Naive thymus-derived CD4-positive, alpha-beta T cell (primary cell): ENCODE measurements at regions of chr10 and their contacts with region 1.

Region 1: GRCh38 chr10:73785221-73785720 is at the start of gene ZSWIM8:
- DNase-seq: peak; percentile 70 to 93 (median 86)
- ATAC-seq: peak; percentile 91
- H3K4me3 ChIP-seq: peak within 1 kb of the TSS; percentile 91
- H3K4me3 Mint-ChIP-seq: peak within 1 kb of the TSS; percentile 97 to 100 (median 98)
- H3K27ac ChIP-seq: peak within 1 kb of the TSS; percentile 83
- H3K27ac Mint-ChIP-seq: peak within 1 kb of the TSS; percentile 95 to 99 (median 98)
- H3K4me1 ChIP-seq: peaks cover 36 to 43% of the 10 kb centered on the region in 2 donors
- H3K4me1 Mint-ChIP-seq: peaks cover 27 to 66% (median 53%) of the 10 kb centered on the region in 7 donors
- H3K27me3 ChIP-seq: no peaks in the 10 kb centered on the region
- H3K27me3 Mint-ChIP-seq: no peaks in the 10 kb centered on the region
- total RNA-seq, gene ZSWIM8: 70.9 to 102 (median 83.2) TPM

Region 2: DNA sequence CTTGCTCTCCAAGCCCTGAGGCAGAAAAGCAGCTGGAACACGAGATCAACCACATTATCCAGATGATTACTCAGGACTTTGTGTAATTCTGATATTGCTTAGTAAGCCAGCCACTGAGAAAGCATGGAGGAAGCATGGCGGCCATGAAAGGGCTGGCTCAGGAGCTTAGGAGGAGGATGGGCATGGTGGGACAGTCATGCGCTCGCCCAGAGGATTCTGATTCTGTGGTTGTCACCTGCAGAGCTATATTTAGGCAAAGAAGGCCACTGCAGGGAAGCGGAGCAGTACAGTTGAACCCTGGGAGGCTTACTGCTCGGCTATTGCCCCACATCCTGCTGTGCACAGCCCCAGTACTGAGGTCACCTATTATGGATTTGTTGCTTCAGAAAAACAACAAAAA is 1301.8 kb before region 1 on chr10:
- CTCF ChIA-PET with region 1: no interaction called
- POLR2A ChIA-PET with region 1: no interaction called
- intact Hi-C with region 1: no loop called
- DNase-seq: no peak
- ATAC-seq: peak; percentile 46
- H3K4me3 ChIP-seq: no peak overlapping the region
- H3K4me3 Mint-ChIP-seq: no peak overlapping the region
- H3K27ac ChIP-seq: no peak overlapping the region
- H3K27ac Mint-ChIP-seq: no peak overlapping the region
- H3K4me1 ChIP-seq: no peaks in the 10 kb centered on the region
- H3K4me1 Mint-ChIP-seq: no peaks in the 10 kb centered on the region
- H3K27me3 ChIP-seq: no peaks in the 10 kb centered on the region
- H3K27me3 Mint-ChIP-seq: no peaks in the 10 kb centered on the region

Region 3: GRCh38 chr10:73730153-73730906 is 54.9 kb before region 1 on chr10:
- CTCF ChIA-PET with region 1: no interaction called
- POLR2A ChIA-PET with region 1: interaction called, 6 read pairs
- intact Hi-C with region 1: loop called (anchors 1 kb)
- DNase-seq: peak; percentile 86 to 94 (median 89)
- ATAC-seq: peak; percentile 94
- H3K4me3 ChIP-seq: peak overlapping the region; percentile 99
- H3K4me3 Mint-ChIP-seq: peak overlapping the region; percentile 95 to 100 (median 98)
- H3K27ac ChIP-seq: peak overlapping the region; percentile 82
- H3K27ac Mint-ChIP-seq: peak overlapping the region; percentile 91 to 98 (median 96)
- H3K4me1 ChIP-seq: peaks cover 5 to 10% of the 10 kb centered on the region in 2 donors
- H3K4me1 Mint-ChIP-seq: peaks cover 0 to 32% (median 21%) of the 10 kb centered on the region in 7 donors
- H3K27me3 ChIP-seq: no peaks in the 10 kb centered on the region
- H3K27me3 Mint-ChIP-seq: no peaks in the 10 kb centered on the region

Region 4: GRCh38 chr10:73803680-73804286 is 18.5 kb after region 1 on chr10:
- CTCF ChIA-PET with region 1: no interaction called
- POLR2A ChIA-PET with region 1: interaction called, 150 read pairs
- intact Hi-C with region 1: loop called (anchors 2 kb)
- DNase-seq: no peak
- ATAC-seq: no peak
- H3K4me3 ChIP-seq: no peak overlapping the region
- H3K4me3 Mint-ChIP-seq: peak overlapping the region in 1 of 10 donors; percentile 24
- H3K27ac ChIP-seq: no peak overlapping the region
- H3K27ac Mint-ChIP-seq: peak overlapping the region; percentile 7 to 84 (median 49)
- H3K4me1 ChIP-seq: peaks cover 9 to 18% of the 10 kb centered on the region in 2 donors
- H3K4me1 Mint-ChIP-seq: peaks cover 23 to 46% (median 38%) of the 10 kb centered on the region in 7 donors
- H3K27me3 ChIP-seq: no peaks in the 10 kb centered on the region
- H3K27me3 Mint-ChIP-seq: no peaks in the 10 kb centered on the region

Region 5: DNA sequence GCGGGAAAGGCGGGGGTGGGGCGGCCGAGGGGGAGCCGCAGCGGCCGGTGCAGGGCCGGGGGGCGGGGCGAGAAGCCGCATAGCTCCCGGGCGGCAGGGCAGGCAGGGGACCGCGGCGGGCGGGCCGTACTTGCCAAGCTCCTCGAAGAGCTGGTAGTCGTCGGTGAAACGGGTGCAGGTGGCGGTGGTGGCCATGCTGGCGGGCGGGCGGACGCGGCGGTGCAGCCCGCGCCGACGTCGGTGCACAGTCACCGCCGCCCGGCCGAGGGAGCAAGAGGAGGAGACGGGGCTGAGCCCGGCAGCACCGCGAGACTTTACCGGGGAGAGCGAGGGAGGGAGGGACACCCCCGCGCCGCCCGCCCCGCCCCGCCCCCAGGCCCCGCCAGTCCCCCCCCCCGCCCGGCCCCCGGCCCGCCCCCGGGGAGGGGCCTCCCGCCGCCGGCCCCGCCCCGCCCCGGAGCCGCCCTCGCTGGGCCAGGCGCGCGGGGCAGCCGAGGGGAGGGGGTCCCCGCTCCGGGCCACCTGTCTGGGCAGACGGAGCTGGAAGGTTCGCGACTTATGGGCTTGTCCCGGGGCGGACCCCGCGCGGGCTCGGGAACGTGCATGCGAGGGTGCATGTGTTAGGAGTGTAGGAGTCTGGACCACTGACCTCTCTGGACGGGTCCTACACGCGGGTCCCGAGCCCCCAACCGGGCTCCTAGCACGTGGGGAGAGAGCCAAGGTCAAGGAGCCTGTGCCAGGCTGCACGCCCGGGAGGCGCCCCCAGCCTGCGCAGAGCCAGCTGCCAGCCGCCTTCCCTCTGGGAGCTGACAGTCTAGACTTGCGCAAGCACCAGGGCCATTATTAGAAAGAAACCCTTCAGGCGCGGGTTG is 89.2 kb after region 1 on chr10 and contains the start of gene CAMK2G:
- CTCF ChIA-PET with region 1: interaction called, 5 read pairs
- POLR2A ChIA-PET with region 1: interaction called, 5 read pairs
- intact Hi-C with region 1: loop called in 1 of 2 experiments (anchors 1 kb)
- DNase-seq: peak; percentile 68 to 86 (median 83)
- ATAC-seq: peak; percentile 91
- H3K4me3 ChIP-seq: peak within 1 kb of the TSS; percentile 94
- H3K4me3 Mint-ChIP-seq: peak within 1 kb of the TSS; percentile 83 to 96 (median 90)
- H3K27ac ChIP-seq: peak within 1 kb of the TSS; percentile 86
- H3K27ac Mint-ChIP-seq: peak within 1 kb of the TSS; percentile 81 to 97 (median 94)
- H3K4me1 ChIP-seq: peaks cover 30 to 48% of the 10 kb centered on the region in 2 donors
- H3K4me1 Mint-ChIP-seq: peaks cover 41 to 84% (median 74%) of the 10 kb centered on the region in 7 donors
- H3K27me3 ChIP-seq: no peaks in the 10 kb centered on the region
- H3K27me3 Mint-ChIP-seq: peaks cover 0 to 2% (median 0%) of the 10 kb centered on the region in 5 donors
- total RNA-seq, gene CAMK2G: 44.6 to 70.9 (median 61.9) TPM